Activated CD4-positive, alpha-beta T cell treated with anti-CD3 and anti-CD28 coated beads, Interleukin-2, amount 10 ng/mL, durations not matched to agents 24 days and 14 days (primary cell): ENCODE measurements at regions of chr3 and their contacts with region 1.

Region 1: GRCh38 chr3:172249039-172249438 is 199.2 kb downstream of the GHSR start:
- DNase-seq: no peak
- H3K4me3 Mint-ChIP-seq: no peak overlapping the region
- H3K27ac Mint-ChIP-seq: no peak overlapping the region
- H3K4me1 Mint-ChIP-seq: peaks cover 4% of the 10 kb centered on the region
- H3K27me3 Mint-ChIP-seq: no peaks in the 10 kb centered on the region

Region 2: GRCh38 chr3:171846597-171846996 is 402.4 kb before region 1 on chr3:
- intact Hi-C with region 1: no loop called
- DNase-seq: peak; percentile 76
- H3K4me3 Mint-ChIP-seq: no peak overlapping the region
- H3K27ac Mint-ChIP-seq: peak overlapping the region; percentile 17
- H3K4me1 Mint-ChIP-seq: peaks cover 17% of the 10 kb centered on the region
- H3K27me3 Mint-ChIP-seq: peaks cover 15% of the 10 kb centered on the region

Region 3: DNA sequence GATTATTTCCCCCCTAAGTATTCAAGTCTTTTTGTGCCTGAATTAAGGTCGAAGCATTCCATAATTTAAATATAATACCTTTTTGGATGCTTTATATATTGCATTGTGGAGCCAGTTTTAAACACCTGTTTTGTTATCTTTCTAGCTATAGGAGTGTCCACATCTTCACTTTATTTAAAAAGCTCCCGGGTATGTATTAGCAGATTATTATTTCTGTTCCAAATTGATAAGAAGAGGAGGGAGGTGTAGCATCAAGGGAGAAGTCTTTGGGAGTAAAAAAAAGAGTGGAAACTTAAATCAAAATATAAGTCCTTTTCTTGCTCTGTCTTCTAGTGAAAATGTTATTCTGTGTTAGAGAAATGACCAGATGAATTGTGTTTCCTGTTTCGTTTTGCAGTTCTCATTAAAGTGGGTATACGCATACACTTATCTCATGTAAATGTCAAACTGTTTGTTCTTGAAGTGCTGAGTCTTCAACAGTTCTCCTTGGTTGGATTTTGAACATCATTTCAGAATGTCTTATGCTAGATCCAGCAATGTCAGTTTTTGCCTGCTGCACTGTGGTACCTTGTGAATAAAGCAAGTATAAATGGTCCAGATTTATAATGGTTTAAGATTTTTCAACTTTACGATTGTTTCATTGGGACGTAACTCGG is 103.9 kb before region 1 on chr3:
- intact Hi-C with region 1: loop called (anchors 5 kb)
- DNase-seq: no peak
- H3K4me3 Mint-ChIP-seq: no peak overlapping the region
- H3K27ac Mint-ChIP-seq: no peak overlapping the region
- H3K4me1 Mint-ChIP-seq: peaks cover 34% of the 10 kb centered on the region
- H3K27me3 Mint-ChIP-seq: no peaks in the 10 kb centered on the region

Region 4: DNA sequence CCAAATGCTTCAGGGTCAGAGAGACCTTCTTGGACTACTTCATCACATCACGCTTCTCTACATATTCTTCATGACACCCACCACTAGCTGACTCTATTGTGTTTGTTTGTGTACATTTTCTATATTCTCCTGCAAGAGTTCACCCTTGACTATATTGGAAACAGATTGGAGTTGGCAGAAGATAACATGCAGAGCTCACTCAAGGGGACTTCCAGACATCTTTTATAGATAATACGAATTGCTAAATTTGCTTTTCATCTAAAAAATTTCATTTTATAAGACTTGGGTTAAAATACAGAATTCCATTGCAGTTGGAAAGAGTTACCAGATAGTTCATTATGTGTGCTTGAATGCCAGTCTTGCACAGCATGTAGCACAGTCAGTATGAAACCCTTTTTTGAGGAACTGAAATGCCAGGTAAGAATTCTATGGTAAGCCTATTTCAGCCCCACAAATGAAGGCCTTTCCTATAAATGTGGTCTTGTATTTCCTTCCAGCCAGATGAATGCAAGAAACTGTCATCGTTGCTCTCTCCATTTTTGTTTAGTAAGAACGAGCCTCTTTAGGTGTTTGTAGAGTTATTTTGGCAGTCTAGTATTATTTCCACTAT is 21.6 kb after region 1 on chr3:
- intact Hi-C with region 1: no loop called
- DNase-seq: no peak
- H3K4me3 Mint-ChIP-seq: no peak overlapping the region
- H3K27ac Mint-ChIP-seq: no peak overlapping the region
- H3K4me1 Mint-ChIP-seq: no peaks in the 10 kb centered on the region
- H3K27me3 Mint-ChIP-seq: no peaks in the 10 kb centered on the region